B cell (primary cell): ENCODE measurements at regions of chr2 and their contacts with region 1.

Region 1: DNA sequence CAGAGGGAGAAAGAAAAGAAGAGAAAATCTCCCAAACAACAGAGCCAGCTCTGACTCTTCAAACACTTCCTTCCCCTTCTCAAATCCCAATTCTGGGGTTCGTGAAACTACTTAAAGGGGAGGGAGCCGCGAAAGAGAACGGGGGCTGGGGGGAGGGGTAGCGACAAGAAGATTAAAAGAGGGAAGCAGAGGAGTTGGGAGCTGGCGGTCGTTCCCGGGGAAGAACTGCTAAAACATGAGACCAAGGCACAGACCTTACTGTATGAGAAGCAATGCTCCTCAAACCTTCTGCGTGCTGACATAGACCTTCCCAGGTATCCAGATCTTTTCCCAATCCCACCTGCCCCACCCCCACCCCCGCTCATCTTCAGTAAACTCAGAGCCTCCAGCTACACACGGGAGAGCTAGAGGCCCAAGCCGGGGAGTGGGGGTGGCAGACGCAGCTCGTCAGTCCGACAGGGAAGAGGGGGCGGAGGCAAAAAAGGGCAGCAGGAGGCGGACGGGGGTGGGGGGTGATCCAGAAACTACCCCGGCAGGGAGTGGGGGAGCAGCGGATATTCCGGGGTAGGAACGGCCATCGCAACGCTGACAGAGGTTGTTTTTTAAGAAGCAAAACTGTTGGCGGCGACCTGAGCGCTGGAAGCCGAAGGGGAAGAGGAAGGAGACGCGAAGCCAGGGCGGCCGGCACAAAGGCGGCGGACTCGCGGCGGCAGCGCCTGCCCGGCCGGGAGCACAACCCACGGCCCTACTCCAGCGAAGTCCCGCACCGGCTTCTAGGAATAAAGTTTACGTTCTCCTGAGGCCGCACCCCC is 1.0 kb downstream of the BAZ2B start:
- DNase-seq: peak; percentile 71
- ATAC-seq: peak; percentile 70
- H3K4me3 ChIP-seq: peak overlapping the region; percentile 72 to 82 (median 81)
- H3K4me3 Mint-ChIP-seq: peak overlapping the region; percentile 87
- H3K27ac ChIP-seq: peak overlapping the region in 1 of 2 donors; percentile 59
- H3K27ac Mint-ChIP-seq: peak overlapping the region; percentile 79
- H3K4me1 ChIP-seq: peaks cover 15 to 16% of the 10 kb centered on the region in 2 donors
- H3K4me1 Mint-ChIP-seq: peaks cover 20% of the 10 kb centered on the region
- H3K27me3 ChIP-seq: peaks cover 0 to 4% (median 0%) of the 10 kb centered on the region in 4 experiments
- H3K27me3 Mint-ChIP-seq: peaks cover 26% of the 10 kb centered on the region
- CTCF ChIP-seq: no peak

Region 2: DNA sequence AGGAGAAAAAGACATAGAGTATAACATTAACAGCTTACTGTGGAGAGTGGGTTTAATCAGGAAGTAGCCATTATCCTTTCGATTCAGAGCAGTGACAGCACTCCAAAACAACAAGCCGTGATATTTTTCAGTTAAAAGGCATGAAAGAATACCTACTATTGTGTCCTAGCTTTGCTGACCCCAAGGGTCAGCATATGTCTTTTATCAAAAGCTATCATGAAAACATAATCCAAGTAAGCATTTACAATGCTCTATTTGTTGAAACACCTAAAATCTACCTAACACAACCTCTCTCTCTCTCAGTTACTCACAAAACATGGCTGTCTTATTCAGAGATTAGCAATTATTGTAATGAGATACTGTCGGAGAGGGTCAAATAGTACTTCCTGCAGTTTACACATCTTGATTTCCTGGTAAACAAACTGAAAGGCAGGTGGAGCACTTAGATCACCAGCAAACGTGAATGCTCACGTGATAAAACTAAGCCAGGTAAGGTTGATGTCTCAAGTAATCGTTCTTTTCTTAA is 99.0 kb before region 1 on chr2:
- CTCF ChIA-PET with region 1: no interaction called
- POLR2A ChIA-PET with region 1: no interaction called
- intact Hi-C with region 1: loop called (anchors 5 kb)
- DNase-seq: peak; percentile 80
- ATAC-seq: peak; percentile 86
- H3K4me3 ChIP-seq: peak overlapping the region; percentile 35 to 91 (median 67)
- H3K4me3 Mint-ChIP-seq: peak overlapping the region; percentile 78
- H3K27ac ChIP-seq: peak overlapping the region; percentile 49 to 79
- H3K27ac Mint-ChIP-seq: peak overlapping the region; percentile 92
- H3K4me1 ChIP-seq: peaks cover 8 to 27% of the 10 kb centered on the region in 2 donors
- H3K4me1 Mint-ChIP-seq: peaks cover 23% of the 10 kb centered on the region
- H3K27me3 ChIP-seq: no peaks in the 10 kb centered on the region
- H3K27me3 Mint-ChIP-seq: no peaks in the 10 kb centered on the region
- CTCF ChIP-seq: no peak

Region 3: GRCh38 chr2:159921752-159922404 is 306.5 kb after region 1 on chr2:
- CTCF ChIA-PET with region 1: no interaction called
- POLR2A ChIA-PET with region 1: no interaction called
- intact Hi-C with region 1: no loop called
- DNase-seq: peak; percentile 75
- ATAC-seq: peak; percentile 96
- H3K4me3 ChIP-seq: no peak overlapping the region
- H3K4me3 Mint-ChIP-seq: no peak overlapping the region
- H3K27ac ChIP-seq: no peak overlapping the region
- H3K27ac Mint-ChIP-seq: no peak overlapping the region
- H3K4me1 ChIP-seq: peaks cover 0 to 9% of the 10 kb centered on the region in 2 donors
- H3K4me1 Mint-ChIP-seq: peaks cover 12% of the 10 kb centered on the region
- H3K27me3 ChIP-seq: no peaks in the 10 kb centered on the region
- H3K27me3 Mint-ChIP-seq: peaks cover 3% of the 10 kb centered on the region
- CTCF ChIP-seq: peak; percentile 82

Region 4: GRCh38 chr2:161384864-161385263 is 1769.5 kb after region 1 on chr2:
- CTCF ChIA-PET with region 1: no interaction called
- POLR2A ChIA-PET with region 1: no interaction called
- intact Hi-C with region 1: no loop called
- DNase-seq: no peak
- ATAC-seq: no peak
- H3K4me3 ChIP-seq: no peak overlapping the region
- H3K4me3 Mint-ChIP-seq: no peak overlapping the region
- H3K27ac ChIP-seq: no peak overlapping the region
- H3K27ac Mint-ChIP-seq: no peak overlapping the region
- H3K4me1 ChIP-seq: peaks cover 0 to 3% of the 10 kb centered on the region in 2 donors
- H3K4me1 Mint-ChIP-seq: peaks cover 24% of the 10 kb centered on the region
- H3K27me3 ChIP-seq: no peaks in the 10 kb centered on the region
- H3K27me3 Mint-ChIP-seq: no peaks in the 10 kb centered on the region
- CTCF ChIP-seq: no peak